GM12878 (cell line): ENCODE measurements at regions of chr2 and their contacts with region 1.

Region 1: DNA sequence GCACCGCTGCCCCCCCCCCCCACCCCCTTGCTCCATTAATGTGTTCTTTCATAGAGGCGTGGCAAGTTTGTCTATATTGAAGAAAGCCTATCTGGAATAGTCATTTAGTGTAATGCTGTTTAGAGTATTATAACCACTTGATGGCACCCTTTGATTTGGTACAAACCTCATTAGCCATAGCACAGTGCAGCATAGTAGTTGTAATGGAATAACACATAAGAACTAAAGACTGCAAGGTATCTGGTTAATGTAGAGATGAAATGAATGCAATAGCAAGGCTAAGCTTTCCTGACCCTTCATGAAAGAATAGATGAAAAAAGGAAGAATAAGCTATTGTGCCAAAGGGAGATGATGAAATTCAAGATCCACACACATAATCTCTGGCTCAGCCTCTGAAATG is 81.9 kb downstream of the EHBP1 start:
- DNase-seq: no peak
- ATAC-seq: peak; percentile 90
- H3K4me3 ChIP-seq: no peak overlapping the region
- H3K27ac ChIP-seq: no peak overlapping the region
- H3K4me1 ChIP-seq: no peaks in the 10 kb centered on the region
- H3K27me3 ChIP-seq: no peaks in the 10 kb centered on the region
- CTCF ChIP-seq: peak; percentile 39 to 66 (median 45); a peak in 4 of 6 replicates
- EP300 ChIP-seq: no peak
- POLR2A ChIP-seq: no peak
- RAD21 ChIP-seq: peak; percentile 88

Region 2: GRCh38 chr2:62774555-62775366 is 12.6 kb before region 1 on chr2:
- CTCF ChIA-PET with region 1: interaction called, 35 read pairs
- POLR2A ChIA-PET with region 1: no interaction called
- RAD21 ChIA-PET with region 1: interaction called, 5 read pairs
- SMC1A ChIA-PET with region 1: interaction called, 14 read pairs
- in situ Hi-C with region 1: no loop called
- intact Hi-C with region 1: no loop called
- DNase-seq: peak; percentile 17
- ATAC-seq: peak; percentile 78
- H3K4me3 ChIP-seq: no peak overlapping the region
- H3K27ac ChIP-seq: no peak overlapping the region
- H3K4me1 ChIP-seq: no peaks in the 10 kb centered on the region
- H3K27me3 ChIP-seq: no peaks in the 10 kb centered on the region
- CTCF ChIP-seq: peak; percentile 49 to 71 (median 56); a peak in 5 of 6 replicates
- EP300 ChIP-seq: no peak
- POLR2A ChIP-seq: no peak
- RAD21 ChIP-seq: peak; percentile 94

Region 3: DNA sequence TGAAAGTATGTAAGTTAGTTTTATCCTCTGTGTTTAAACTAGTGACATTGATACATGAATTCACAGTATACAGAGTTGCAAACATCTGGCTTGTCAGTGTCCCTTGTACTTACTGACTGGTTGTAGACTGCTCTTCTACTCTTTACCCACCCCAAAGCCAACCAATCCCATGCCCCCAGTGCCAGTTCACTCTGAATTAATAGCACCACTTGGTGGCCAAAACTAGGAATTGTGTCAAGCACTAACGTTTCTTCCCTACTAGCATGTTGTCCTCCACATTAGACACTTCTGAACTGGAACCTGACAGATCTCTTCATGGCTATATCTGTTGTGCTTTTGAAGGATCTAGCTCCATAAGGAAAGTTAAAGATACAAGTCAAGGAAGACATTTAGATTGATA is 236.1 kb after region 1 on chr2:
- CTCF ChIA-PET with region 1: interaction called, 9 read pairs
- POLR2A ChIA-PET with region 1: no interaction called
- RAD21 ChIA-PET with region 1: no interaction called
- SMC1A ChIA-PET with region 1: interaction called, 5 read pairs
- in situ Hi-C with region 1: no loop called
- intact Hi-C with region 1: loop called (anchors 5 kb)
- DNase-seq: peak; percentile 12
- ATAC-seq: peak; percentile 88
- H3K4me3 ChIP-seq: no peak overlapping the region
- H3K27ac ChIP-seq: no peak overlapping the region
- H3K4me1 ChIP-seq: no peaks in the 10 kb centered on the region
- H3K27me3 ChIP-seq: no peaks in the 10 kb centered on the region
- CTCF ChIP-seq: peak; percentile 32 to 38 (median 34); a peak in 4 of 6 replicates
- EP300 ChIP-seq: no peak
- POLR2A ChIP-seq: no peak
- RAD21 ChIP-seq: peak; percentile 41; the same call in 1 of the 2 replicates

Region 4: DNA sequence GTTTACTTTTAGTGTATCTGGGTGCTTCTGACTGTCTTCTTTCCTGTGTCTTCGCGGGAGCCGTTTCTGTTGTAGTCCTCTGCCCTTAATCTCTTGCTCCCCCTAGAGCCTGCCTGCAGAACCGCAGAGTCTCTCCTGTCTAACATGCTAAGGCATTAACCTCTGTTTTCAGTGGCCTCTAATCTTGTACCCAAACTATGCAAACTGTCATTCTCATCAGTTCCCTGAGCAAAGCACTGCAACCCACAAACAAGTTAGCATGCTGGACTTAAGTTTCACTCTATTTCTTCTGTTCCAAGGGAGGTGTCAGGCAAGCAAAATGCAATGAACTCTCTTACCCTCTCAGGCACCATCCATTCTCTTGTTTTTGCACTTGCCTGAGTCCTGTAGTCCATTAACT is 401.6 kb after region 1 on chr2:
- CTCF ChIA-PET with region 1: interaction called, 20 read pairs
- POLR2A ChIA-PET with region 1: no interaction called
- RAD21 ChIA-PET with region 1: interaction called, 4 read pairs
- SMC1A ChIA-PET with region 1: interaction called, 8 read pairs
- in situ Hi-C with region 1: loop called (anchors 5 kb)
- intact Hi-C with region 1: loop called (anchors 2 kb)
- DNase-seq: peak; percentile 12
- ATAC-seq: peak; percentile 99
- H3K4me3 ChIP-seq: no peak overlapping the region
- H3K27ac ChIP-seq: no peak overlapping the region
- H3K4me1 ChIP-seq: no peaks in the 10 kb centered on the region; the same call in 1 of the 2 replicates
- H3K27me3 ChIP-seq: no peaks in the 10 kb centered on the region
- CTCF ChIP-seq: peak; percentile 80 to 92 (median 83)
- EP300 ChIP-seq: no peak
- POLR2A ChIP-seq: no peak
- RAD21 ChIP-seq: peak; percentile 63

Region 5: DNA sequence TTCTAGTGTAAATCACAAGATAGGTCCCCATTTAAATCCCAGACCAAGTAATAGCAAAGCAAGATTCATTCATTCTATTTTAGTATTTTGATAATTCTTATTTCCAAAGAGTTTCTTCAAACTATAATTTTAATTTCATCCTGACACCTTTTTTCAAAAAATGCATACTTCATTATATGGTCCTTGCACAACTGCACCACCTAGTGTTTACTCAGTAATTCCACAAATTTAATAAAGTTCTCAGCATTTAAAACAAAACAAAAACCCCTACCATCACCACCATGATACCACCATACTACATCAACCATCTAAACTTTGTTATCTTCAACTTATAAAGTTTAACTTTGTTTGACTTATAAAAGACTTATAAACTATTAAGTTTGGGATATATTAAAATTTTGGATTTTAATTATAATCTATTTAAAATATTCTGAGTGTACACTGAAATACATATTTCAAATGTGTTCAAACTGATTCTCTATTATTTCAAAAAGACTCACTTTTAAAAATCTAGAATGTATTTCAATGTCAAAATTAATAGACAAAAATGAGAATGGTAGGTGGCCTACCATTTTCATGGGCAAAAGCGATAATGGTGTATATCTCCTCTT is 756.7 kb after region 1 on chr2:
- CTCF ChIA-PET with region 1: interaction called, 6 read pairs
- POLR2A ChIA-PET with region 1: no interaction called
- RAD21 ChIA-PET with region 1: interaction called, 4 read pairs
- SMC1A ChIA-PET with region 1: no interaction called
- in situ Hi-C with region 1: loop called (anchors 10 kb)
- intact Hi-C with region 1: no loop called
- DNase-seq: no peak
- ATAC-seq: peak; percentile 67
- H3K4me3 ChIP-seq: no peak overlapping the region
- H3K27ac ChIP-seq: no peak overlapping the region
- H3K4me1 ChIP-seq: no peaks in the 10 kb centered on the region
- H3K27me3 ChIP-seq: no peaks in the 10 kb centered on the region
- CTCF ChIP-seq: peak; percentile 34 to 49 (median 45); a peak in 4 of 6 replicates
- EP300 ChIP-seq: no peak
- POLR2A ChIP-seq: no peak
- RAD21 ChIP-seq: peak; percentile 53; the same call in 1 of the 2 replicates